ENCODE measurements at regions of chr6 and their contacts with region 1.

Region 1: DNA sequence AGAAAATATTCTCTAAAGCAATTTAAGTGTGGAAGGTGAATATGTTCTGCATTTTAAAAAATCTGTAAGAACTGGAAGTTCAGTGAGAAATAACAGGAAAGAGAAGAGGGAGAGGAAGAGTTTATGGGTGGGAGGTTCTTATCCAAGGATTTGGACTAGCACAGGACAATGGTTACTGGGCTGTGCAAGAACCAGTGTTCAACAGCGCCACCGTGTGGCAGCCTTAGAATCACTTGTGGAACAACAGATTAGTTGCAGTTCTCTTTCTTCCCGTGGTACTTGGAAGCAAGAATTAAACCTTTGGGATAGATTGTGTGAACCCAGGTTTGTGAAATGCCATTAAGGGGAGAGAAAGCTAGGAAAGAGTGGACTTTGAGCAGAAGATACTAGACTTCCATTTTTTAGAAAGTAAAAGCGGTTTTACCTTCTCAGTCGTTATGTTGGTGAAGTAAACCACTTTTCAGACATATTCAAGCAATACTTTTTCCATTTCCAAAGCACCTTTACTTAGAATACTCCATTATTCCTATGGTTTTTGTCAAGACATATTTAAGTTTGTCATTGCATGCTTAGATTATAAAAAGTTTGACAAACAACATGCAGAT is 436.7 kb downstream of the RNF144B start:
- DNase-seq: peak; percentile 37 to 84 (median 59)
- ATAC-seq: peak; percentile 74
- H3K4me3 ChIP-seq: no peak overlapping the region
- H3K27ac ChIP-seq: no peak overlapping the region
- H3K4me1 ChIP-seq: no peaks in the 10 kb centered on the region
- H3K27me3 ChIP-seq: no peaks in the 10 kb centered on the region
- CTCF ChIP-seq: peak; percentile 68 to 76 (median 73)
- EP300 ChIP-seq: no peak
- POLR2A ChIP-seq: no peak
- RAD21 ChIP-seq: peak; percentile 42 to 72

Region 2: DNA sequence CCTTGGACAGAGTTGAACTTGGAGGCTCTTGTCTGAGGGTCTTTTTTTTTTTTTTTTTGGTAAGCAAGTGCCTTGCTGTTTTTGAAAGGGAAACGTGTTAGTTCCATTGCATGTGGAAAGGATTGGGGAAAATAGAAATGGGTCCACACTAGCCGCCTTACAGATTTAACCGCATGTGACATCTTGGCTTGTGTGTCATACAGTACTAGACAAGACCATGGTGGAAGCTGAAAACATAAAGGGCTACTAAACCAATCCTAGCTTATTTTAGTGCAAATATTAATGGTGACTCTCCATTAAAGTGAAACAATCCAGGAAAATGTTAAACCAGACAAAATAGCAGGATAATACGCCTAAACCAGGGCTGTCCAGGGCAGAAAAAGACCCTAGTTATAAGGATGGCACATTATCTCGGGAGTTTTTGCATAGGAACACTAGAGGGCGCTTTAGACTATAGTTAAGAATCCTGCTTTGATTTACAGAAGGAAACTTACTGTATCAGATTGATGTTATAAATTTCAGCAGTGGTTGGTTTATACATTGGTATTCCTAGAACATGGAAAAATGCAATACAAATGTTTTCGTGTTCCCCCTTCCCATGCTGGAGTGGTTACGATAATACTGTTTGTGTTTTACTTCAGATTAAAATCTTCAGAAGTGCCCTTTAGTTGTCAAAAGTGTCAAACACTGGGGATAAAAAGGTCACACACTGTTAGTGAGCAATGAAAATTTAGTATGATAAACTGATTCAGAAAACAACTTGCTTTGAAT is 499.8 kb before region 1 on chr6:
- CTCF ChIA-PET with region 1: no interaction called
- POLR2A ChIA-PET with region 1: no interaction called
- in situ Hi-C with region 1: no loop called
- intact Hi-C with region 1: loop called (anchors 5 kb)
- DNase-seq: peak; percentile 42 to 60 (median 56)
- ATAC-seq: peak; percentile 82
- H3K4me3 ChIP-seq: no peak overlapping the region
- H3K27ac ChIP-seq: no peak overlapping the region
- H3K4me1 ChIP-seq: no peaks in the 10 kb centered on the region
- H3K27me3 ChIP-seq: peaks cover 5 to 10% of the 10 kb centered on the region in 2 experiments; a peak in 2 of 5 replicates
- CTCF ChIP-seq: peak; percentile 60 to 85 (median 79); a peak in 5 of 6 replicates
- EP300 ChIP-seq: no peak
- POLR2A ChIP-seq: no peak
- RAD21 ChIP-seq: peak; percentile 79 to 87

Region 3: DNA sequence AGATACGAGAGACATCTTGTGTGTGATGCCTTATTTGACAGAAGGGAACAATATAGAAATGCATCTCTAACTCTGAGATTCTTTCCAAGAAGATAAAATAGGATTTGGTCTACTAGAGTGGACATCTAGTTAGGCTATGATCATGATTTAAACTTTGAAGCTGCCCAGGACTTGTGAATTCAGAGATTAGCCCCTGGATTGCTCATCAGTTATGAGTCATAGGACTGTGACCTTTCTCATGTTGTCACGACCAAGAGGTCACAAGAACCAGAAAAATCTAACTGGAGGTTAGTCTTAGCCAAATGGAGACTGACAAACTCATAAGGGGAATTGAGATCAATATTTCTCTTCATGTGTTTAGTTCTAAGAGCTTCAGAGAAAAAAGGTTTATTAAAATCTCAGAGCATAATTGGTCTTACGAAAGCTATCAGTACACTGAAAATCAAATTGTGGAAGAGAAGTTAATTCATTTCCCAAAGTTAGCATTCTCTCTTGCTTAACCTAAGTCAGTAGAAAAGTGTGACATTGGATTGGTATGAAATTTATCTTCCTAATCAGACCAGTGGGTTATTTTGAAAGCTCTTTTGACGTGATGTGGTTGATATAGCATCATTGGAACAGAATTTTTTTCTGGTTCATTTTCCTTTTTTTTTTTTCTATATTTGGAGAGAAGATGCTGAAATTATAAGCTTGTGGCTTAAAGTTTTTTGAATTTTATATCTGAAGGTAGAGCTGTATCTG is 191.0 kb before region 1 on chr6:
- CTCF ChIA-PET with region 1: no interaction called
- POLR2A ChIA-PET with region 1: no interaction called
- in situ Hi-C with region 1: no loop called
- intact Hi-C with region 1: no loop called
- DNase-seq: no peak
- ATAC-seq: no peak
- H3K4me3 ChIP-seq: no peak overlapping the region
- H3K27ac ChIP-seq: no peak overlapping the region
- H3K4me1 ChIP-seq: no peaks in the 10 kb centered on the region
- H3K27me3 ChIP-seq: no peaks in the 10 kb centered on the region
- CTCF ChIP-seq: no peak
- EP300 ChIP-seq: no peak
- POLR2A ChIP-seq: no peak
- RAD21 ChIP-seq: no peak